ENCODE measurements at regions of chr5 and their contacts with region 1.

Region 1: GRCh38 chr5:74640450-74640953 is at the start of gene ENC1:
- DNase-seq: peak; percentile 42
- H3K4me3 ChIP-seq: peak within 1 kb of the TSS; percentile 93
- H3K27ac ChIP-seq: peak within 1 kb of the TSS; percentile 75
- H3K27me3 ChIP-seq: no peaks in the 10 kb centered on the region
- CTCF ChIP-seq: peak; percentile 57
- polyA plus RNA-seq, gene ENC1: 19.3 and 23.1 TPM in 2 replicates

Region 2: GRCh38 chr5:74257645-74258313 is 382.7 kb before region 1 on chr5:
- CTCF ChIA-PET with region 1: interaction called, 17 read pairs
- POLR2A ChIA-PET with region 1: interaction called, 9 read pairs
- DNase-seq: no peak
- H3K4me3 ChIP-seq: no peak overlapping the region
- H3K27ac ChIP-seq: no peak overlapping the region
- H3K27me3 ChIP-seq: peaks cover 2% of the 10 kb centered on the region
- CTCF ChIP-seq: no peak

Region 3: GRCh38 chr5:74665273-74665672 is 24.8 kb after region 1 on chr5:
- CTCF ChIA-PET with region 1: no interaction called
- POLR2A ChIA-PET with region 1: no interaction called
- DNase-seq: no peak
- H3K4me3 ChIP-seq: no peak overlapping the region
- H3K27ac ChIP-seq: no peak overlapping the region
- H3K27me3 ChIP-seq: no peaks in the 10 kb centered on the region
- CTCF ChIP-seq: no peak